Sigmoid colon (tissue), 7 donors: ENCODE measurements at regions of chr16 and their contacts with region 1.

Region 1: GRCh38 chr16:55465077-55465896 is 13.7 kb upstream of the MMP2 start:
- DNase-seq: peak; percentile 93
- H3K4me3 ChIP-seq: no peak overlapping the region
- H3K27ac ChIP-seq: no peak overlapping the region
- H3K4me1 ChIP-seq: peaks cover 0 to under 1% (median under 1%) of the 10 kb centered on the region in 4 donors
- H3K27me3 ChIP-seq: peaks cover 0 to 3% (median 0%) of the 10 kb centered on the region in 3 donors
- CTCF ChIP-seq: peak; percentile 99 to 100 (median 100)
- EP300 ChIP-seq: no peak
- POLR2A ChIP-seq: no peak

Region 2: DNA sequence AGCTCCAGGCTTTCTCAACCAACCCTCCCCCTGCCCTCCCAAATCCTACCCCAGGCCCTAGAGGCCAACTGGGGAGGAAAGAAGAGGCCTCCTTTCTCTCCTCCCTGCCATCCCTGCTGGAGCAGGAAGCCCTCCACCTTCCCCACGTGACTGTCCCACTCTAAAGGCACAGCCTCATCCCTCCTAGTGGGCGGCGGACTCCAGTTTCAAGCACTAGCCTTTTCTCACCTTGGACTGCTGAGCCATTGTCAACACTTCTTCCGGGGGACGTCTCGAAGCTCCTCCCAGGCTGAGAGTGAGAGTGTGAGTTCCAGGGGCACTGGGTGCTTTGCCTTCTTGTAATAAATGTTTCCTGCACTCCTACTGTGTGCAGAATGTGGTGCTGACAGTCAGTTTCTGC is 162.7 kb before region 1 on chr16:
- intact Hi-C with region 1: no loop called
- DNase-seq: no peak
- H3K4me3 ChIP-seq: no peak overlapping the region
- H3K27ac ChIP-seq: no peak overlapping the region
- H3K4me1 ChIP-seq: no peaks in the 10 kb centered on the region
- H3K27me3 ChIP-seq: peaks cover 0 to 19% (median 0%) of the 10 kb centered on the region in 3 donors
- CTCF ChIP-seq: no peak
- EP300 ChIP-seq: no peak
- POLR2A ChIP-seq: no peak

Region 3: GRCh38 chr16:55543472-55543871 is 78.2 kb after region 1 on chr16:
- intact Hi-C with region 1: loop called (anchors 1 kb)
- DNase-seq: no peak
- H3K4me3 ChIP-seq: no peak overlapping the region
- H3K27ac ChIP-seq: no peak overlapping the region
- H3K4me1 ChIP-seq: peaks cover 0 to 7% (median 3%) of the 10 kb centered on the region in 4 donors
- H3K27me3 ChIP-seq: no peaks in the 10 kb centered on the region
- CTCF ChIP-seq: peak in 2 of 4 experiments; percentile 21 to 38
- EP300 ChIP-seq: no peak
- POLR2A ChIP-seq: no peak

Region 4: DNA sequence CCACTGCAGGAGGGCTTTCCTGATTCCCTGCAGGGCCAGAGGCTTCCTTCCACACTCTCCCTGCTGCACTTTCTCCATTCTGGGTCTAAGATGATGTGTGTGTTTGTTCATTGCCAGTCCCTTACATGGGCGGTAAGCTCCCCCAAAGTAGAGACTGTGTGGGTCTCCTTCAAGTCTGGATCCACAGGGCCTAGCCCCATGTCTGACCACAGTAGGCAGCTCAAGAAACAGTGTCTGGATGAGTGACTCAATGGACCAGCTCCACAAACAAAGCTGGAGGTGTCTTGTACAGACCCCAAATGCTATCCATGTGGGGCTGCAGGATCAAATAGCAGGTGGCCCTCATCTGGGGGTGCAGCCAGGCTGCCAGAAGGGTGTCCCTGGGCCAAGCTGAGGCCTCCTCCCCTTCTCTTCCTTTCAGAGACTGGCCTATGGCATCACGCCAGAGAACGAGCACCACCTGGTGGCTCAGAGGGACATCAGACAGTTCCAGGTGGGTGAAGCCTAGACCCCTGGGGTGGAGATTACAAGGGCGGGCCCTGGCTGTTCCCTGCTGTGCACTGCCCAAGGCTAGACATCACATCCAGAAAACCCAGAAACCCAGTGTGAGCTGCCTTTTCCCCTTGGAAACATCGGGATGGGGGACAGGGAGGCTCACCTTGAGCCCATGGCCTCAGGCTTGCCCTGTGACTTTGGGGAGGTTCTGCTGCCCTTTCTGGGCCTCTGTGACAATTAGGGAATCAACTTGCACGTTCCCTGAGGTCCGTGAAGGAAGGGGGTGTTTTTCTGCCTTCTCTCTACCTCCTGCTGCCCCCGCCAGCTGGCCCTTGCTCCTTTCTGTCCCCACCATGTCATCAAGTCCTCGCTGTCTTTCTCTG is 236.4 kb after region 1 on chr16:
- intact Hi-C with region 1: loop called (anchors 1 kb)
- DNase-seq: peak; percentile 73
- H3K4me3 ChIP-seq: no peak overlapping the region
- H3K27ac ChIP-seq: no peak overlapping the region
- H3K4me1 ChIP-seq: no peaks in the 10 kb centered on the region
- H3K27me3 ChIP-seq: peaks cover 0 to 5% (median 2%) of the 10 kb centered on the region in 3 donors
- CTCF ChIP-seq: peak in 3 of 4 experiments; percentile 42 to 57 (median 44)
- EP300 ChIP-seq: no peak
- POLR2A ChIP-seq: no peak

Region 5: DNA sequence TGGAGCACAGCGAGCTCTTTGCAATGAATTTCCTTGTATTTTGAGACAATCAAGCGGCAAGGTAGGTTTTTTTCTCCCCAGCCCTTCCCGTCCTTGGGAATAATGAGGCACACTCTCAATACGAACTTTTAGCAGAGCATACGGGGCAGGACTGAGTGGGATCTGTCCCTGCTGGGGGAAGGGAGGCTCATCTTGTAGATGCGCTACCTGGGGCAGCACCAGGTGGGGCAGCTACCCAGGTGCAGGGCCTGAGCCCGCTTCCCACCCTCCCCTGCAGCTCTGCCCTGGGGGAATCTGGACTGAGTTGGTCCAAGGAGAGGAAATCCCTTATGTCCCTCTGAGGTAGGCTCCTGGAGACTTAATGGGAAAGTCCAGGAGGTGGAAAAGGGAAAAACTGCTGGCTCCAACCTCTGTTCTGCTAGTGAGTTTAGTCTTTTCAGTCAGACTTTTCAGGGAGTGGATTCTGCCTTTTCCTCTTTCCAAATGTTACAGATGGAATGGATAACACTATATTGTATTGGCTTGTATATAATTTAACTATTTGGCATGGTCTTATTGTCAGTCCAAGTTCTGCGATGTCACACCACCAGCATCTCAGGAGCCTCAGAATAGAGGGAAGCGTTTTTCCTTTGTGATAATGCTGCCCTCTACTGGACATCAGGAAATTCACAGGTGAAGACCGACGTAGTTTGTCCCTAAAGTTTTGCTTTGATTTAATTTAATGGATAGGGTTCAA is 377.2 kb after region 1 on chr16:
- intact Hi-C with region 1: loop called (anchors 1 kb)
- DNase-seq: no peak
- H3K4me3 ChIP-seq: no peak overlapping the region
- H3K27ac ChIP-seq: no peak overlapping the region
- H3K4me1 ChIP-seq: no peaks in the 10 kb centered on the region
- H3K27me3 ChIP-seq: peaks cover 0 to 20% (median 0%) of the 10 kb centered on the region in 3 donors
- CTCF ChIP-seq: peak; percentile 37 to 82 (median 54)
- EP300 ChIP-seq: no peak
- POLR2A ChIP-seq: no peak